ENCODE measurements at regions of chr1 and their contacts with region 1.

Region 1: GRCh38 chr1:25520446-25521061 is 22.9 kb upstream of the LDLRAP1 start:
- DNase-seq: peak; percentile 82
- ATAC-seq: peak; percentile 62
- H3K4me3 Mint-ChIP-seq: no peak overlapping the region
- H3K27ac Mint-ChIP-seq: no peak overlapping the region
- H3K4me1 Mint-ChIP-seq: peaks cover 7% of the 10 kb centered on the region
- H3K27me3 Mint-ChIP-seq: no peaks in the 10 kb centered on the region

Region 2: DNA sequence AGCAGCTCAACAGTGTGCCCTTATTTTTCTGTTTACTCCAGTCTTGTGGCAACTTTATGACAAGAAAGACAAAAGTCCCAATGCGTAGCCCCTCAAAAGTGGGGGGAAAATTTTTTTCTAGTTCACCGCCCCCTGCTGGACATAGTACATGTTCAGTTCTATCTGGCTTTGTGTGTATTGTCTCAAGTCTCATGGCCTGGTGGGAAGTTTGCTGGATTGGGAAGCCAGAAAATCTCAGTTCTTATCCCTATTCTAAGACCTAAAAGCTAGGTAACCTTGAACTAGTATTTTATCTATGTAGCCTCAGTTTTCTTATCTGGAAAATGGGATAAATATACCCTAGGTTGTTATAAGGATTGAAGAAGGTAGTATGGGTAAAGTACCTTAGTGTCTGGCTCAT is 32.9 kb before region 1 on chr1:
- CTCF ChIA-PET with region 1: interaction called, 10 read pairs
- POLR2A ChIA-PET with region 1: no interaction called
- DNase-seq: peak; percentile 51
- ATAC-seq: no peak
- H3K4me3 Mint-ChIP-seq: no peak overlapping the region
- H3K27ac Mint-ChIP-seq: no peak overlapping the region
- H3K4me1 Mint-ChIP-seq: no peaks in the 10 kb centered on the region
- H3K27me3 Mint-ChIP-seq: no peaks in the 10 kb centered on the region

Region 3: GRCh38 chr1:25503551-25504426 is 16.8 kb before region 1 on chr1:
- CTCF ChIA-PET with region 1: interaction called, 45 read pairs
- POLR2A ChIA-PET with region 1: no interaction called
- DNase-seq: peak; percentile 72
- ATAC-seq: peak; percentile 93
- H3K4me3 Mint-ChIP-seq: no peak overlapping the region
- H3K27ac Mint-ChIP-seq: no peak overlapping the region
- H3K4me1 Mint-ChIP-seq: peaks cover 11% of the 10 kb centered on the region
- H3K27me3 Mint-ChIP-seq: peaks cover 2% of the 10 kb centered on the region

Region 4: DNA sequence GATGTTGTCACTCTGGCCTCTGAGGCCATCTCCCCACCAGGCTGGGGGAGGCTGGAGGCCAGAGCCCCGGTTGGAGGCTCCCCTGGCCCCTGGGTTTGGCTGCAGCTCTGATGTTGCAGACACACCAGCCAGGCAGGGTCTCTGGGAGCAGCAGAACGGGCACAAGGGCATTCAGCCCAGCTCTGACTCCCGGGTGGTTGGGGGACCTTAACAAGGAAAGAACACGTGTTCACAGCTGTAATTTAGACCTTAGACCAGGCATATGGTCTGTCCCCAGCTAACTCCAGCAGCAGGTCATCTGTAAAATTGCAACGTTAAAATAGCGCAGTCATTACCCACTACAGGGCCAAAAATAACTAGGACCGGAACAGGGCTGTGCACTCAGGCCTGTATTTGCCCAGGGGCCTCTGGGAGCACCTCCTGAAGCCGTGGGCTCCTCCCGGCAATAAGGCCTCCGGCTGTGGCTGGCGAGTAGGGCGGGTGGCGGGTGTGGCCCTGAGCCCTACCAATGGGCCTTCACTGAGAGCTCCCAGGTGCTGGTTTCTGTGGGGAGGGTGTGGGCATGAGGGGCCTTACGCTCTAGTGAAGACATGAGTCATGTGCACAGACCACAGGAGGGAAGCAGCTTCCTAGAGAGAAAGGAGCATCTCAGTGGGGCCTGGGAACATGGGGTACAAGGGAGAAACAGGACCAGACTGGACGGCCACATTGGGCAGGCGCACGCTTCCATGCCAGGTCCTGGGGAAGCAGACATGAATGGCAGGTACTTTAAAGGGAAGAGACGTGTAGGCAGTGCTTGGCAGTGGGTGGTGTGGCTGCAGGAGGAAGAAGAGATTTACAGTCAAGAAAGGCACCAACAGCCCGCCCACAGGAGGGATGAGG is 29.0 kb after region 1 on chr1:
- CTCF ChIA-PET with region 1: interaction called, 17 read pairs
- POLR2A ChIA-PET with region 1: no interaction called
- DNase-seq: peak; percentile 90
- ATAC-seq: peak; percentile 94
- H3K4me3 Mint-ChIP-seq: peak overlapping the region; percentile 55
- H3K27ac Mint-ChIP-seq: peak overlapping the region; percentile 89
- H3K4me1 Mint-ChIP-seq: peaks cover 84% of the 10 kb centered on the region
- H3K27me3 Mint-ChIP-seq: no peaks in the 10 kb centered on the region

Region 5: GRCh38 chr1:25566730-25567341 is 46.3 kb after region 1 on chr1:
- CTCF ChIA-PET with region 1: interaction called, 16 read pairs
- POLR2A ChIA-PET with region 1: no interaction called
- DNase-seq: peak; percentile 63
- ATAC-seq: no peak
- H3K4me3 Mint-ChIP-seq: peak overlapping the region; percentile 58
- H3K27ac Mint-ChIP-seq: peak overlapping the region; percentile 84
- H3K4me1 Mint-ChIP-seq: peaks cover 75% of the 10 kb centered on the region
- H3K27me3 Mint-ChIP-seq: no peaks in the 10 kb centered on the region

Region 6: GRCh38 chr1:25572708-25573600 is 52.4 kb after region 1 on chr1:
- CTCF ChIA-PET with region 1: interaction called, 16 read pairs
- POLR2A ChIA-PET with region 1: no interaction called
- DNase-seq: peak; percentile 67
- ATAC-seq: peak; percentile 72
- H3K4me3 Mint-ChIP-seq: no peak overlapping the region
- H3K27ac Mint-ChIP-seq: no peak overlapping the region
- H3K4me1 Mint-ChIP-seq: peaks cover 22% of the 10 kb centered on the region
- H3K27me3 Mint-ChIP-seq: no peaks in the 10 kb centered on the region

Measured in activated CD8-positive, alpha-beta T cell treated with anti-CD3 and anti-CD28 coated beads, Interleukin-2, amount 10 ng/mL, durations not matched to agents 7 days and 5 days (primary cell).